ENCODE measurements at regions of chr14 and their contacts with region 1.

Region 1: DNA sequence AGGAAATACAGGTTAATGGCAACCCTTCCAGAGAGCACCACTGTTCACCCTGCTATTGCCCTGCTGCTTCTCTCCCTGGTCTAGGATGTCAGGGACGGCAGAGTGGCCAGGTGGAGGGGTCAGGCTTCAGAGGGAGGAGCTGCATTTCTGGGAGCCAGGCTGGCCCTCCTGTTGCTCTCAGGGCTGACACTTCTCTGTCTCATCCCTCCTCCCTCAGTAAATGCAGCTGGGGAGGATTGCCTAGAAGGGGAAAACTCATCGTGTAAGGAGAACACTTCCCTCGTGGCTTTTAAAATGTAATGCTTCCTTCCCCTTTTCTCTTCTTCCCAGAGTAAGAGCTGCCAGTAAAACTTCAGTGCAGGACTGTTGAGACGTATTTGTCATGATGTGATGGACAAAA is 20.8 kb downstream of the SUSD6 start:
- DNase-seq: no peak
- H3K4me3 ChIP-seq: no peak overlapping the region
- H3K4me3 Mint-ChIP-seq: no peak overlapping the region
- H3K27ac Mint-ChIP-seq: peak overlapping the region; percentile 78
- H3K4me1 ChIP-seq: peaks cover 47% of the 10 kb centered on the region
- H3K4me1 Mint-ChIP-seq: peaks cover 59% of the 10 kb centered on the region
- H3K27me3 ChIP-seq: no peaks in the 10 kb centered on the region
- H3K27me3 Mint-ChIP-seq: no peaks in the 10 kb centered on the region
- CTCF ChIP-seq: no peak

Region 2: GRCh38 chr14:69068744-69069421 is 563.3 kb before region 1 on chr14:
- CTCF ChIA-PET with region 1: no interaction called
- POLR2A ChIA-PET with region 1: no interaction called
- intact Hi-C with region 1: no loop called
- DNase-seq: no peak
- H3K4me3 ChIP-seq: no peak overlapping the region
- H3K4me3 Mint-ChIP-seq: no peak overlapping the region
- H3K27ac Mint-ChIP-seq: no peak overlapping the region
- H3K4me1 ChIP-seq: 0 out of 2 replicates have a peak, but pooled peaks cover 8% of the 10 kb centered on the region
- H3K4me1 Mint-ChIP-seq: peaks cover 1% of the 10 kb centered on the region
- H3K27me3 ChIP-seq: no peaks in the 10 kb centered on the region
- H3K27me3 Mint-ChIP-seq: no peaks in the 10 kb centered on the region
- CTCF ChIP-seq: no peak

Region 3: GRCh38 chr14:69611201-69612011 is 20.8 kb before region 1 on chr14 and contains the start of gene SUSD6:
- CTCF ChIA-PET with region 1: no interaction called
- POLR2A ChIA-PET with region 1: no interaction called
- intact Hi-C with region 1: loop called (anchors 2 kb)
- DNase-seq: peak; percentile 88 to 90
- H3K4me3 ChIP-seq: peak within 1 kb of the TSS; percentile 67
- H3K4me3 Mint-ChIP-seq: peak within 1 kb of the TSS; percentile 91
- H3K27ac Mint-ChIP-seq: peak within 1 kb of the TSS; percentile 78
- H3K4me1 ChIP-seq: peaks cover 36% of the 10 kb centered on the region
- H3K4me1 Mint-ChIP-seq: peaks cover 52% of the 10 kb centered on the region
- H3K27me3 ChIP-seq: no peaks in the 10 kb centered on the region
- H3K27me3 Mint-ChIP-seq: no peaks in the 10 kb centered on the region
- CTCF ChIP-seq: no peak
- total RNA-seq, gene SUSD6: 16.6 and 21.5 TPM in 2 replicates

Region 4: DNA sequence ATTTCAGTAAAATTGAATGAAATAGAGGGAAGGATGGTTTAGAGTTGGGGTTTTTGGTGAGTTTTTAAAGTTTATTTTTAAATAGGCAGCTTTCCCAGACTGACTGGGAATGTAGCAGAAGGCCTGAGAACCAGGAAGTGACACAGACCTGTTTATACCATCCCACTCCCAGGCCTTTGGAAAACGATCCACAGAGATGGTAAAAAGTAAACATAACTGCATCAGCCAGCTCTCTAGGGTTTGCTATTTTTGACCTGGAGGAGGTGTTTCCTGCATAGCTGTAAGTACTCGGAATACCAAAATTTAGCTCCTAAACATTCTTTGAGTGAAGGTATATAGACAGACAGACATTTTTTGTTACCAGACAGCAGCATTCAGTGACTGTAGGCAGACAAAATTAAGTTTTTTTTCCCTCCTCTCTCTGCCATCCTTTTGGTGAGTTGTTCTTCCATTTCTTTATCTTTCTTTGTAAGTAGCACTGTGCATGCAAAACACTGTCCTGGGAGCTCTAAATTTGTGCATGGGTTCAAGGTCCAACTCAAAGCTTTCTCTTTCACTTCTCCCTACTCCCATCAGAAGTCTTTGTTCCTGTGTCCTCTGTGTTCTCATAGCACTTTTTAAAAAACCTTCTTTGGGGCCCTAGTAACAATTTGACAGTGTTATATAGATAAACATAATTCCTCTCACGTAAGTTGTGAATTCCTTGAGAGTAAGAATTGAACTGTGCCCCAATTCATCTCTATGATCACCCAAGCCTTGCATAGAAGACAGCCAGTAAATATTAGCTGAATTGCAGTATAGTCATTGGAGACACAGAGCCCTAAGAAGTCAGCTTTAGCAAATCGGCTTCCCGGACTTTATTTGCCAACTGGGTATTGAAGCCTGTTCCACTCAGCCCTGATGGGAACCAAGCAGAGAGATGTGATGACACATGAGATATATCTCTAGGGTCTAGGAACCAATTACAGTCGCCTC is 16.6 kb after region 1 on chr14:
- CTCF ChIA-PET with region 1: interaction called, 3 read pairs
- POLR2A ChIA-PET with region 1: no interaction called
- intact Hi-C with region 1: loop called (anchors 2 kb)
- DNase-seq: peak in 1 of 2 experiments; percentile 42
- H3K4me3 ChIP-seq: peak overlapping the region; percentile 9; the same call in 1 of the 2 replicates
- H3K4me3 Mint-ChIP-seq: peak overlapping the region; percentile 55
- H3K27ac Mint-ChIP-seq: peak overlapping the region; percentile 64
- H3K4me1 ChIP-seq: peaks cover 71% of the 10 kb centered on the region
- H3K4me1 Mint-ChIP-seq: peaks cover 36% of the 10 kb centered on the region
- H3K27me3 ChIP-seq: no peaks in the 10 kb centered on the region
- H3K27me3 Mint-ChIP-seq: no peaks in the 10 kb centered on the region
- CTCF ChIP-seq: no peak

Region 5: GRCh38 chr14:69708586-69709174 is 76.5 kb after region 1 on chr14:
- CTCF ChIA-PET with region 1: interaction called, 13 read pairs
- POLR2A ChIA-PET with region 1: no interaction called
- intact Hi-C with region 1: no loop called
- DNase-seq: peak; percentile 49 to 53
- H3K4me3 ChIP-seq: no peak overlapping the region
- H3K4me3 Mint-ChIP-seq: no peak overlapping the region
- H3K27ac Mint-ChIP-seq: no peak overlapping the region
- H3K4me1 ChIP-seq: peaks cover 11% of the 10 kb centered on the region; the same call in 1 of the 2 replicates
- H3K4me1 Mint-ChIP-seq: peaks cover 18% of the 10 kb centered on the region
- H3K27me3 ChIP-seq: no peaks in the 10 kb centered on the region
- H3K27me3 Mint-ChIP-seq: no peaks in the 10 kb centered on the region
- CTCF ChIP-seq: peak; percentile 44 to 49